ENCODE measurements at regions of chr9 and their contacts with region 1.

Region 1: GRCh38 chr9:94853887-94854286 is 127.4 kb downstream of the AOPEP start:
- DNase-seq: no peak
- ATAC-seq: no peak
- H3K4me3 ChIP-seq: no peak overlapping the region
- H3K27ac ChIP-seq: no peak overlapping the region
- H3K4me1 ChIP-seq: peaks cover 0 to 2% (median 0%) of the 10 kb centered on the region in 12 donors
- H3K27me3 ChIP-seq: no peaks in the 10 kb centered on the region
- CTCF ChIP-seq: no peak
- POLR2A ChIP-seq: no peak

Region 2: GRCh38 chr9:94819161-94819699 is 34.7 kb before region 1 on chr9:
- intact Hi-C with region 1: loop called in 1 of 10 experiments (anchors 5 kb)
- DNase-seq: peak in 2 of 5 donors; percentile 53 to 60
- ATAC-seq: peak in 3 of 4 donors; percentile 70 to 74 (median 72)
- H3K4me3 ChIP-seq: no peak overlapping the region
- H3K27ac ChIP-seq: peak overlapping the region in 11 of 12 donors; percentile 32 to 79 (median 50)
- H3K4me1 ChIP-seq: peaks cover 0 to 55% (median 11%) of the 10 kb centered on the region in 12 donors
- H3K27me3 ChIP-seq: no peaks in the 10 kb centered on the region
- CTCF ChIP-seq: no peak
- POLR2A ChIP-seq: no peak

Measured in heart left ventricle (tissue), 16 donors.